PC-9 (cell line): ENCODE measurements at regions of chr18 and their contacts with region 1.

Region 1: GRCh38 chr18:35526476-35527120 is 28.8 kb upstream of the INO80C start:
- DNase-seq: peak; percentile 42 to 68
- H3K4me3 ChIP-seq: peak overlapping the region; percentile 19; the same call in 1 of the 2 replicates
- H3K27ac ChIP-seq: no peak overlapping the region
- H3K4me1 ChIP-seq: peaks cover 14% of the 10 kb centered on the region
- H3K27me3 ChIP-seq: no peaks in the 10 kb centered on the region
- CTCF ChIP-seq: no peak

Region 2: GRCh38 chr18:34840256-34840815 is 686.3 kb before region 1 on chr18:
- CTCF ChIA-PET with region 1: no interaction called
- POLR2A ChIA-PET with region 1: no interaction called
- intact Hi-C with region 1: no loop called
- DNase-seq: no peak
- H3K4me3 ChIP-seq: no peak overlapping the region
- H3K27ac ChIP-seq: no peak overlapping the region
- H3K4me1 ChIP-seq: no peaks in the 10 kb centered on the region
- H3K27me3 ChIP-seq: no peaks in the 10 kb centered on the region
- CTCF ChIP-seq: no peak

Region 3: GRCh38 chr18:35240664-35241447 is 285.7 kb before region 1 on chr18 and contains the start of gene ZNF397:
- CTCF ChIA-PET with region 1: no interaction called
- POLR2A ChIA-PET with region 1: interaction called, 13 read pairs
- intact Hi-C with region 1: no loop called
- DNase-seq: peak; percentile 80 to 87
- H3K4me3 ChIP-seq: peak within 1 kb of the TSS; percentile 92
- H3K27ac ChIP-seq: peak within 1 kb of the TSS; percentile 67
- H3K4me1 ChIP-seq: no peaks in the 10 kb centered on the region; the same call in 1 of the 2 replicates
- H3K27me3 ChIP-seq: no peaks in the 10 kb centered on the region
- CTCF ChIP-seq: no peak
- total RNA-seq, gene ZNF397: 8.1 and 9.3 TPM in 2 replicates

Region 4: DNA sequence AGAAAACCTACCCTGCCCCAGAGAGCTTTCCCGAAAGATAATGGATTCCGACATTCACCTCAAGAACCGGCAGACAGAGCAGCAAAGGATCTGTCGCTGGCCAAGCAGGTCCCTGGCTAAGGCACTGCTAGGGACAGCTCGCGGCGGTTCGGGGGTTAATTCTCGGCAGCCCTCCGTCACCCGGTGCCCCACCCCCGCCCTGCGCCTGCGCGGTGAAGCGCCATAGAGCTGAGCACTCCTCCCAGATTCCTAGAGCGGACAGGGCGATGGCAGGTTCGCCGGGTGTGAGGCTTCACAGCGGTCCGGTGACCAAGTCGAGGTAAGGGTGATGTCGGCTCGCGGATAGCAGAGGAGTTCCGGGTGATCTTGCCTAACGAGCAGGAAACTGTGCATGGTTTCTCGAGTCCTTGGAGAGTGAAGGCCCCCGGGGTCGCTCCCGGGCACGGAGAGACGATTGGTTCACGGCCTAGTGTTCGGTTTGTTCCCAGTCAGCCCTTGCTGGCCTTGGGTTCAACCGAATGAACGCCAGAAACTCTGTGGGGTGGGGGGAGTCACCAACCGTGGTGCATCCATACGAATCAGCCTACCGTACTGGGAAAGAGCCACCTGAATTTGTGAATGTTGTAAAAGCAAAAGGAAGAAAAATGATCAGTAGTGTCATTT is 236.4 kb before region 1 on chr18 and contains the start of gene ZSCAN30:
- CTCF ChIA-PET with region 1: no interaction called
- POLR2A ChIA-PET with region 1: no interaction called
- intact Hi-C with region 1: no loop called
- DNase-seq: peak; percentile 75 to 88
- H3K4me3 ChIP-seq: peak within 1 kb of the TSS; percentile 82
- H3K27ac ChIP-seq: peak within 1 kb of the TSS; percentile 54
- H3K4me1 ChIP-seq: peaks cover 3% of the 10 kb centered on the region; the same call in 1 of the 2 replicates
- H3K27me3 ChIP-seq: no peaks in the 10 kb centered on the region
- CTCF ChIP-seq: no peak
- total RNA-seq, gene ZSCAN30: 16.9 and 18.5 TPM in 2 replicates

Region 5: DNA sequence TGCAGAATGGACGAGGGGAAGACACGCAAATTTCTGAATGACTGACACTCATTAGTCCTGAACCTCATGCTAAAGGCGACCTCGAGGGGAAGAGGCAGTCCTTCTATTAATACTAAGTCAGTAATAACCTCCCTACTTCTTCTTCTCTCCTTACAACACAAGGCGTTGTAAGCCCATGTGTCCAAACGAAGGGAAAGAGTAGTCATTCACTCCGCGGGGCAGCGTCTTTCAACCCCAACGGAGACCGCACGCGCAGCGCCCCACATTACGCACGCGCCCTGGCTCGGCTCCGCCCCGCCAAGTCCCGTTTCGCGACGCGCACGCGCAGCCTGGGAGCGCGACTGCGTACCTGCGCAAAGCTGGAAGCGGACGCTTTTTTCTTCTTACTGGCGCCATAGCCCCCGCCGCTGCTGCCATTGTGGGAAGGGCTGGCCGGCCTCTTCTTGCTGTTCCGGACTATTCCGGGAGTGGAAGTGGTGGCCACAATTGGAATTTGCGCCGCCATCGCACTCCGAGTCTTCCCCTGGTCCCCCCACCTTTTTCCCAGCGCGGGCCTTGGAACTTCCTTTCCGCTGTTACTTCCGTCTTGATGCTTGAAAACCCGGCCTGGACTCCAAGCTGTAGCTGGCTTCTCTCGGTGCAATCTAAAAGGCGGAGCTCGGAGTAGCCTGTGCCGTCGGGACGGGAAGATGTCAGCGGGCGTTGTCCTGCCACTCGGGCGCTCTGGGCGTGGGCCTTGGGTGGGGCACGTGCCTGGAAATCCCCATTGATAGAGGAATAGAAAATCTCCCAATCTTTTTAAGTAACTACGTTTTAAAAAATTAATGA is 29.0 kb before region 1 on chr18 and contains the start of gene INO80C:
- CTCF ChIA-PET with region 1: no interaction called
- POLR2A ChIA-PET with region 1: interaction called, 21 read pairs
- intact Hi-C with region 1: no loop called
- DNase-seq: peak; percentile 79 to 84
- H3K4me3 ChIP-seq: peak within 1 kb of the TSS; percentile 65
- H3K27ac ChIP-seq: peak within 1 kb of the TSS; percentile 79
- H3K4me1 ChIP-seq: peaks cover 23% of the 10 kb centered on the region
- H3K27me3 ChIP-seq: no peaks in the 10 kb centered on the region
- CTCF ChIP-seq: no peak
- total RNA-seq, gene INO80C: 23.9 and 29.5 TPM in 2 replicates

Region 6: DNA sequence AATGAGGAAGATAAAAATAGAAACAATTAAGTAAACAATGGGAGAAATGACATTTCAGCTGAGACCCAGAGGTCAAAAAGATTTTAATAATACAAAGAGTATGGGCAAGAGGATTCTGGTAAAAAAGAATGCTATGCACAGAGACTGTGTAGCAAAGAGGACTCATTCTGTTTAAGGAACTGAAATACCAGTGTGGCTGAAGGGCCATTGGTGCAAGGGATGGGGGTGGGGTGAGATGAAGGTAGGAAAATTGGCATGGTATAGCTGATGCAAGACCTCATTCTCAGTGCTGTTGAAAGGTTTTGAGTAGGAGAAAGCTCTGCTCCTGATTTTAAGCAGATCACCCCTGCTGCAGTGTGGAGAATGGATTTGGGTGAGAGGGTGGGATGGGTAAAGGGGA is 65.7 kb after region 1 on chr18:
- CTCF ChIA-PET with region 1: interaction called, 13 read pairs
- POLR2A ChIA-PET with region 1: no interaction called
- intact Hi-C with region 1: no loop called
- DNase-seq: no peak
- H3K4me3 ChIP-seq: no peak overlapping the region
- H3K27ac ChIP-seq: no peak overlapping the region
- H3K4me1 ChIP-seq: no peaks in the 10 kb centered on the region
- H3K27me3 ChIP-seq: no peaks in the 10 kb centered on the region
- CTCF ChIP-seq: no peak

Region 7: DNA sequence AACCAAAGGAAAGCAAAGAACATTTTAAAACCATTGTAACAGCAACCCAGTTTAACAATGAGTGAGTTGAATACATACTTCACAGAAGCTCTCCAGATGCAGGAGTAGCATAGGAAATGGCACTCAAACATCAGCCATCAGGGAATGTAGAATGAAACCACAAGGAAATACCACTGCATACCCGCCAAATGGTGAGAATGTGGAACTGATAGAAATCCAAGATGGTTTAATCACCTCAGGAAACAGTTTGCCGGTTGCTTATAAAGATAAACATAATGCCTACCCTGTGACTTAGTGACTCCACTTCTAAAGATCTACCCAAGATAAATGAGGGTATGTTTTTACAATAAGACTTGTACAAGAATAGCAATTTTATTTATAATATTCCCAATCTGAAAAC is 186.9 kb after region 1 on chr18:
- CTCF ChIA-PET with region 1: no interaction called
- POLR2A ChIA-PET with region 1: no interaction called
- intact Hi-C with region 1: no loop called
- DNase-seq: no peak
- H3K4me3 ChIP-seq: no peak overlapping the region
- H3K27ac ChIP-seq: no peak overlapping the region
- H3K4me1 ChIP-seq: no peaks in the 10 kb centered on the region
- H3K27me3 ChIP-seq: no peaks in the 10 kb centered on the region
- CTCF ChIP-seq: no peak